Colonic mucosa (tissue), 4 donors: ENCODE measurements at regions of chr19 and their contacts with region 1.

Region 1: DNA sequence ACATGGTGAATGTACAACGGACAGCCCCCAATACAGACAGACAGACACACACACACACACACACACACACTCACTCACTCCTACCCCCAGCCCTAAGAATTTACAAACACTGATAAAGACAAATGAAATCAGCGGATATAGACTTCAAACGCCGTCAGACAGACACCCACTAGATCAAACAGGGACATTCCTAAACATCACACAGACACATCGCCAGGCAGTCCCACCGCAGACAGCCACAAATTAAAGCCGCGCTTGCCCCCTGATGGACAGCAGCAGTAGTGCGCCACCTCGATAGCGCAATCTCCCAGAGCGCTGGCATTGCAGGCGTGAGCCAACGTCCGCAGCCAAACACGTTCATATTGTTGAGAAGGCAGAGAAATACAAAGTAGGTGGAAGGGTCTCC is 24.7 kb upstream of the ADGRE1 start:
- DNase-seq: peak; percentile 87
- H3K4me3 ChIP-seq: peak overlapping the region; percentile 25
- H3K27ac ChIP-seq: no peak overlapping the region
- H3K4me1 ChIP-seq: no peaks in the 10 kb centered on the region
- H3K27me3 ChIP-seq: no peaks in the 10 kb centered on the region
- CTCF ChIP-seq: peak; percentile 83

Region 2: DNA sequence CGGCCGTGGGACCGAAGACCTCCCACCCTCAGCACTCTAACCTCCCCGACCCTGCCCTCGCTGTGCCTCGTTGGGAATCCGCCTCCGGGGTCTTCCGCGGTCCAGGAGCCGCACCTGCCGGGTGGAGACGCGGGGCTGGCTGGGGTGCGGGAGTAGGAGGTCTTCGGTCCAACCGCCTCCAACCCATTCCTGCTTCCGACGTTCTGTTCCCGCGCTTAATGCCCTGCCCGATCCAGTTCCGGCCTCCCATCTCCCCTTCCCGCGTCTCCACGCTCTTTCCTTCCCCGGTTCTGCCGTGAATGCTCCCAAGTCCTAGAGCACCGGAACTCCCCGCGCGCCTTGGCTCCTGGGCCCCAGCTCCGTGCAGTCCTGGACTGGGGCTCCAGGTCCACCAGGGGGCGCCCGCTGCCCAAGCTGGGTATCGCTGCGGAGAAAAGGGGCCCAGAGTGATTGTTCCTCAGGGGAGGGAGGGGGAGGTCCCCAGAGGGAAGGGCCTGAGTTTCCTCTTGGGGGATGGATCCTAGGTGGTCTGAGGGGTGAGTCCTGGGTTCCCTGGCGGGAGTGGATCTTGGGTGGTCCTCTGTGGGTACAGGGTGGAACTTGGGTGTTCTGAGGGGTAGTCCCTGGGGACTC is 345.9 kb before region 1 on chr19:
- intact Hi-C with region 1: loop called (anchors 10 kb)
- DNase-seq: peak; percentile 94
- H3K4me3 ChIP-seq: peak overlapping the region; percentile 59
- H3K27ac ChIP-seq: peak overlapping the region; percentile 63
- H3K4me1 ChIP-seq: no peaks in the 10 kb centered on the region
- H3K27me3 ChIP-seq: no peaks in the 10 kb centered on the region
- CTCF ChIP-seq: peak; percentile 95

Region 3: GRCh38 chr19:6632002-6632621 is 230.6 kb before region 1 on chr19:
- intact Hi-C with region 1: loop called (anchors 5 kb)
- DNase-seq: peak; percentile 89
- H3K4me3 ChIP-seq: no peak overlapping the region
- H3K27ac ChIP-seq: no peak overlapping the region
- H3K4me1 ChIP-seq: no peaks in the 10 kb centered on the region
- H3K27me3 ChIP-seq: no peaks in the 10 kb centered on the region
- CTCF ChIP-seq: peak; percentile 69

Region 4: DNA sequence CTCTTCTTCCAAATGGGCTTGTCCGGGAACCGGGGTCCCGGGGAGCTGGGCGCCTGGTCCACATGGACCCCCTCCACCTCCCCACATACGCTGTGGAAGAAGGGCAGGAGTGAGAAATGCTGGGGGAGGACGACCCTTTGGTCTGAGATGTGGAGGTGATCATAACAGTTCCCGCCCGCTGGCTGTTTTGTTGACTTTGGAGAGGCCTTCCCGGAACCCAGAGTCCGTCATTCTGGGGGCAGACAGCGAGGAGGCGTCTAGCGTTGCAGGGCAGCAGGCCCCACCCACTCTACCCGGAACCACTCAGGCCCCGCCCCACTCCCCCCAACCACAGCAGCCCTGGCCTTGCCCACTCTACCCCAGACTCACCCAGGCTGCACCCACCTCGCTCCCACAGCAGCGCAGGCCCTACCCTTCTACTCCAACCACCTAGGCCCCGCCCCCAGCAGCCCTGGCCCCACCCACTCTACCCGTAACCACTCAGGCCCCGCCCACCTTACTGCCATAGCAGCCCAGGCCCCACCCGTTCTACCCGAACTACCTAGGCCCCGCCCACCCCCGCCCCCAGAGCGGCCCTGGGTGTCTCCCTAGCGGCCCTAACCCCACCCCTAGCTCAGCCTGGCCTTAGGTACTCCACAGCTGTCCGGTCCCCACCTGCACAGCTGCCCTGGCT is 132.4 kb before region 1 on chr19:
- intact Hi-C with region 1: loop called (anchors 5 kb)
- DNase-seq: peak; percentile 97
- H3K4me3 ChIP-seq: peak overlapping the region; percentile 20
- H3K27ac ChIP-seq: peak overlapping the region; percentile 40
- H3K4me1 ChIP-seq: no peaks in the 10 kb centered on the region
- H3K27me3 ChIP-seq: no peaks in the 10 kb centered on the region
- CTCF ChIP-seq: no peak

Region 5: DNA sequence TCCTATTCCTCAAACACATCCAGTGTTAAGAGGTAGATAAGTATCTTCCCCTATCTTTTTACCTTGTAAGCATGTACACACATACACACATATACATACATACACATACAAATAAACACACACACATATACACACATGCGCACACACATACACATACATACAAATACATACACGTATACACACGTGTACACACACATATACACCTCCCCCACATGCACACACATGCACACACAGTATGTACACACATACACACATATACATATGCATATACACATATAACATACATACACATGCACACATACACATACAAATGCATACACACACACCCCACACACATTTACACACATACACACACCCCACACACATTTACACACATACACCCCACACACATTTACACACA is 48.8 kb after region 1 on chr19:
- intact Hi-C with region 1: no loop called
- DNase-seq: no peak
- H3K4me3 ChIP-seq: no peak overlapping the region
- H3K27ac ChIP-seq: no peak overlapping the region
- H3K4me1 ChIP-seq: no peaks in the 10 kb centered on the region
- H3K27me3 ChIP-seq: no peaks in the 10 kb centered on the region
- CTCF ChIP-seq: no peak

Region 6: GRCh38 chr19:6979399-6979798 is 116.7 kb after region 1 on chr19:
- intact Hi-C with region 1: no loop called
- DNase-seq: no peak
- H3K4me3 ChIP-seq: no peak overlapping the region
- H3K27ac ChIP-seq: no peak overlapping the region
- H3K4me1 ChIP-seq: no peaks in the 10 kb centered on the region
- H3K27me3 ChIP-seq: no peaks in the 10 kb centered on the region
- CTCF ChIP-seq: no peak